HEK293T (cell line): ENCODE measurements at regions of chr20 and their contacts with region 1.

Region 1: GRCh38 chr20:17569616-17570346 is at the start of gene DSTN:
- DNase-seq: peak; percentile 91

Region 2: DNA sequence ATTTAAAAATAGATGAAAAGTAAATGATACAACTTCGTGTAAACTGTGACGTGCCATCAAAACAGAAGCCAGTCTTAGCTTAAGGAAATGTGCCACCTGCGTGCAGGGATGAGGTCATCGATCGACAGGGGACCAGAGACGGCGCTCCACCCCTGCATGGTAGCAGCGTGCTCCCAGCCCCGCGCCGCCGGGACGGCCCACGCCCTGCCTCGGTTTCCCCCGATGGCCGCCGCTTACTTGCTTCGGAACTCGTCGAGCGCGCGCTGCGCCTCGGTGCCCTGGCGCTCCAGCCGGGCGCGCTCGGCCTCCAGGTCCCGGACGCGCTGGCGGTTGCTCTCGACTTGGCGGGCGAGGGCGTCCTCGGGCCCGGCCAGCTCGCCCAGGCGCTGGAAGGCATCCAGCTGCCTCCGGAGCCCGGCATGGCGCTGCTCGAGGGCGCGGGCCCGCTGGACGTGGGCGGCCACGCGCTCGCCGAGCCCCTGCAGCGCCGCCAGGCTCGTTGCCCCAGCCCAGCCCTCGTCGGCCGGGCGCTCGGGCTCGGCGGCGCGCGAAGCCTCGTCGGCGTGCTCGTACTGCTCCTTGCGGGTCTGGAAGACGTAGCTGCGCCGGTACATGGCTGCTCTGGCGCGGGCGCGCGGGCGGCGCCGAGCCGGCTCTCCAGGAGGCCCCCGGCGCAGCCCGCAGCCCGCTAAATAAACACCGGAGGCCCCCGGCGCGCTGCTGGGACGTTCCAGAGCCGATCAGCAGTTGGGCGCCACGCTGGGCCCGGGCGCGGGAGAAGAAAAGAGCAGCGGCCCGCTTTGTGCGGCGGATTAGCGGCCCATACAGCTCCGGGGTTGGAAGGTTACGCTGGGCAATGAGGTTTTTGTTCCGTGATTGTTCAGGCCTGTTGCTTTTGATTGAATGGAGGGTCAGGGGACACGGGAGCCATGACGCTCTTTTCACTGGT is 38.8 kb before region 1 on chr20 and contains the start of gene BFSP1:
- CTCF ChIA-PET with region 1: no interaction called
- POLR2A ChIA-PET with region 1: interaction called, 16 read pairs
- DNase-seq: peak; percentile 67

Region 3: DNA sequence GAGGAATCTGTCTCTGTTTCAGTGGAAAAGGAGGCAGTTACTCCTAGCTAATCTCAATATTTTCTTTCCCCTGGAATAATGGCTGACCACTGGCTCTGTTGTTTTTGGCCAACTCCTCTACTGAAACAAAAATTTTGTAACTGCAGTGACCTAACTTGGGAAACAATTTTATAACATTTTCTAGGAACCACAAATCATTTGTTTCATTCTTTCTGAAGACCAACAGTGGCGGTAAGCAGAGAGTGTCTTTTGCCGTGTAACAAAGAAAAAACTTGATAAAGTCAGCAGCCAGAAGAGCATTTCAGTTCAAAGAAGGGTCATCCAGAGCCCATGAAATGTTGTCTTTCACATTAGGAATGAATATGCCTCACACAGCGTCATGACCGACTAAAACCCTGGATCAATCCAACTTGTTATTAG is 26.8 kb before region 1 on chr20:
- CTCF ChIA-PET with region 1: interaction called, 3 read pairs
- POLR2A ChIA-PET with region 1: interaction called, 11 read pairs
- DNase-seq: no peak

Region 4: GRCh38 chr20:17558154-17558940 is 11.4 kb before region 1 on chr20:
- CTCF ChIA-PET with region 1: interaction called, 3 read pairs
- POLR2A ChIA-PET with region 1: interaction called, 13 read pairs
- DNase-seq: peak; percentile 22

Region 5: GRCh38 chr20:17612287-17612991 is 42.7 kb after region 1 on chr20:
- CTCF ChIA-PET with region 1: interaction called, 3 read pairs
- POLR2A ChIA-PET with region 1: interaction called, 11 read pairs
- DNase-seq: no peak

Region 6: GRCh38 chr20:17699931-17700657 is 130.3 kb after region 1 on chr20 and contains the start of gene BANF2:
- CTCF ChIA-PET with region 1: no interaction called
- POLR2A ChIA-PET with region 1: no interaction called
- DNase-seq: no peak